ENCODE measurements at regions of chr19 and their contacts with region 1.

Region 1: GRCh38 chr19:16062789-16063188 is 13.5 kb upstream of the TPM4 start:
- DNase-seq: peak; percentile 78
- ATAC-seq: peak; percentile 48
- H3K4me3 Mint-ChIP-seq: no peak overlapping the region
- H3K27ac Mint-ChIP-seq: peak overlapping the region; percentile 40
- H3K4me1 Mint-ChIP-seq: peaks cover 33% of the 10 kb centered on the region
- H3K27me3 Mint-ChIP-seq: peaks cover 10% of the 10 kb centered on the region

Region 2: DNA sequence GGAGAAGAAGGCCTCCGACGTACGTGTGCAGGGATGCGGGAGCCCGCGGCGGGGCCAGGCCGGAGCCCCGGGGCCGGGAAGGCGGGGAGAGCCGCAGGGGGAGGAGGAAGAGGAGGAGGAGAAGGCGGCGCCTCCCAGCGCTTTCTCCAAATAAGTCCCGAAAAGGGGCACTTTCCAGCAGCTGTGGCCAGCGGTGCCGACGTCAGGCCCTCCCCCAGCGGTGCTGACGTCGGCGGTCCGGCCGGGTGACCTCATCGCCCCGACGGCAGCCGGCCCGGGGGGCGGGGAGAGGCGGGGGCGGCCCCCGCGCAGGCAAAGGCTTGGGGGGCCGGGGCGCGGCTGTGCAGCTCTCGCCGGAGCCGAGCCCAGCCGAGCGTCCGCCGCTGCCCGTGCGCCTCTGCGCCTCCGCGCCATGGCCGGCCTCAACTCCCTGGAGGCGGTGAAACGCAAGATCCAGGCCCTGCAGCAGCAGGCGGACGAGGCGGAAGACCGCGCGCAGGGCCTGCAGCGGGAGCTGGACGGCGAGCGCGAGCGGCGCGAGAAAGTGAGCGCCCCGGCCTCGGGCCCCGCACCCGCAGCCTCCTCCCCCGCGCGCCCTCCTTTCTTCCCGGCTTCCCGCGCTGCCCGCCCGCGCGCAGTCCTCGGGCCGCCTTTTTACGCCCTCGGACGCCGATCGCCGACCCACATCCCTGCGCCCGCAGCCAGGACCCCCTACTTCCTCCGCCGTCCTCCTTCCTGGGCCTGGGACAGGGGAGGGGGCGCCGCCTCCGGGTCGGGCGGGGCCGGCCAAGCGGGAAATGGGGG is 13.6 kb after region 1 on chr19 and contains the start of gene TPM4:
- CTCF ChIA-PET with region 1: interaction called, 62 read pairs
- DNase-seq: peak; percentile 96
- ATAC-seq: peak; percentile 65
- H3K4me3 Mint-ChIP-seq: peak within 1 kb of the TSS; percentile 80
- H3K27ac Mint-ChIP-seq: peak within 1 kb of the TSS; percentile 98
- H3K4me1 Mint-ChIP-seq: peaks cover 69% of the 10 kb centered on the region
- H3K27me3 Mint-ChIP-seq: no peaks in the 10 kb centered on the region
- total RNA-seq, gene TPM4: 491 to 493 TPM

Region 3: GRCh38 chr19:16088351-16089009 is 25.7 kb after region 1 on chr19:
- CTCF ChIA-PET with region 1: interaction called, 43 read pairs
- DNase-seq: no peak
- ATAC-seq: no peak
- H3K4me3 Mint-ChIP-seq: no peak overlapping the region
- H3K27ac Mint-ChIP-seq: peak overlapping the region; percentile 56
- H3K4me1 Mint-ChIP-seq: peaks cover 64% of the 10 kb centered on the region
- H3K27me3 Mint-ChIP-seq: no peaks in the 10 kb centered on the region

Region 4: DNA sequence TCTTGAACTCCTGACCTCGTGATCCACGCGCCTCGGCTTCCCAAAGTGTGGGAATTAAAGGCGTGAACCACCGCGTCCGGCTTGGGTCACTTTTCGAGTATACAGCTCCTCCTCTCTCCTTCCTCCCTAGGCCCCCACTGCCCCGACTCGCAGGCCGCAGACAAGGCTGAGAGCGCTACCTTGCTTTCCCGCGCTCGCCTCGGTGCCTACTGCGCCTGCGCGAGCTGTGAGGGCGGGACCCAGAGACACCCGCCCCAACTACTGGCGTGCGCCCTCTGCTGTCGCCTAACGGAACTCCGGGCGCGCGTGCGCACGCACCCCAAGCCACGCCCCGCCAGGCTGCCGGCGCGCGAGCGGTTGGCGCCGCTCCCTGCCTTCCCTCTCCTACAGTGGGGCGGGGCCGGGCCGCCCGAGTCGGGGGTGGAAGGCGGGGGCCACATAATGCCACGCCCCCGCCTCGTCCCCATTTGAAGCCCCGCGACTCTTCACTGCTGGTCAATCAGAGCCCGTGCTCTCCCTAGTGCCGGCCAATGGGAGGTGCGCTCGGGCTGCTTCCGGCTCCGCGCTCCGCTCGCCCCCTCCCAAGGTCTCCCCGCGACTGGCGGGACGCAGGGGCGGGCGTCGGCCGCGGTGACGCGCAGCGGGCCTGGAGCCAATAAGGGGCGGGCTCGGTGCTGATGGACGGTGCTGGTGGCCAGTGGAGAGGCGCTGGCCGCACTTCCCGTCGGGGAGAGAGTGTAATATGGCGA is 48.5 kb after region 1 on chr19 and contains the start of gene RAB8A:
- CTCF ChIA-PET with region 1: interaction called, 18 read pairs
- DNase-seq: peak; percentile 99
- ATAC-seq: peak; percentile 94
- H3K4me3 Mint-ChIP-seq: peak within 1 kb of the TSS; percentile 92
- H3K27ac Mint-ChIP-seq: peak within 1 kb of the TSS; percentile 97
- H3K4me1 Mint-ChIP-seq: peaks cover 40% of the 10 kb centered on the region
- H3K27me3 Mint-ChIP-seq: no peaks in the 10 kb centered on the region
- total RNA-seq, gene RAB8A: 204 to 271 TPM

Region 5: GRCh38 chr19:16143399-16144245 is 80.8 kb after region 1 on chr19 and contains the start of gene HSH2D:
- CTCF ChIA-PET with region 1: interaction called, 14 read pairs
- DNase-seq: peak; percentile 96
- ATAC-seq: peak; percentile 93
- H3K4me3 Mint-ChIP-seq: peak within 1 kb of the TSS; percentile 98
- H3K27ac Mint-ChIP-seq: peak within 1 kb of the TSS; percentile 100
- H3K4me1 Mint-ChIP-seq: peaks cover 71% of the 10 kb centered on the region
- H3K27me3 Mint-ChIP-seq: no peaks in the 10 kb centered on the region
- total RNA-seq, gene HSH2D: 181 to 199 TPM